Sigmoid colon (tissue), 7 donors: ENCODE measurements at regions of chr6 and their contacts with region 1.

Region 1: DNA sequence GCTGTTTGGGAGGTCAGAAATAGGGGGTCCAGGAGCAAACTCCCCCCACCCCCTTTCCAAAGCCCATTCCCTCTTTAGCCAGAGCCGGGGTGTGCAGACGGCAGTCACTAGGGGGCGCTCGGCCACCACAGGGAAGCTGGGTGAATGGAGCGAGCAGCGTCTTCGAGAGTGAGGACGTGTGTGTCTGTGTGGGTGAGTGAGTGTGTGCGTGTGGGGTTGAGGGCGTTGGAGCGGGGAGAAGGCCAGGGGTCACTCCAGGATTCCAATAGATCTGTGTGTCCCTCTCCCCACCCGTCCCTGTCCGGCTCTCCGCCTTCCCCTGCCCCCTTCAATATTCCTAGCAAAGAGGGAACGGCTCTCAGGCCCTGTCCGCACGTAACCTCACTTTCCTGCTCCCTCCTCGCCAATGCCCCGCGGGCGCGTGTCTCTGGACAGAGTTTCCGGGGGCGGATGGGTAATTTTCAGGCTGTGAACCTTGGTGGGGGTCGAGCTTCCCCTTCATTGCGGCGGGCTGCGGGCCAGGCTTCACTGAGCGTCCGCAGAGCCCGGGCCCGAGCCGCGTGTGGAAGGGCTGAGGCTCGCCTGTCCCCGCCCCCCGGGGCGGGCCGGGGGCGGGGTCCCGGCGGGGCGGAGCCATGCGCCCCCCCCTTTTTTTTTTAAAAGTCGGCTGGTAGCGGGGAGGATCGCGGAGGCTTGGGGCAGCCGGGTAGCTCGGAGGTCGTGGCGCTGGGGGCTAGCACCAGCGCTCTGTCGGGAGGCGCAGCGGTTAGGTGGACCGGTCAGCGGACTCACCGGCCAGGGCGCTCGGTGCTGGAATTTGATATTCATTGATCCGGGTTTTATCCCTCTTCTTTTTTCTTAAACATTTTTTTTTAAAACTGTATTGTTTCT is at the start of gene VEGFA:
- DNase-seq: peak; percentile 94
- H3K4me3 ChIP-seq: peak within 1 kb of the TSS; percentile 55 to 88 (median 66)
- H3K27ac ChIP-seq: peak within 1 kb of the TSS; percentile 95 to 99 (median 98)
- H3K4me1 ChIP-seq: peaks cover 0 to 42% (median 40%) of the 10 kb centered on the region in 4 donors
- H3K27me3 ChIP-seq: no peaks in the 10 kb centered on the region
- CTCF ChIP-seq: peak; percentile 97 to 100 (median 99)
- EP300 ChIP-seq: no peak
- POLR2A ChIP-seq: peak; percentile 58 to 72
- total RNA-seq, gene VEGFA: 20.9 to 60.9 (median 28.5) TPM

Region 2: GRCh38 chr6:43621429-43622180 is 148.2 kb before region 1 on chr6:
- intact Hi-C with region 1: no loop called
- DNase-seq: no peak
- H3K4me3 ChIP-seq: no peak overlapping the region
- H3K27ac ChIP-seq: no peak overlapping the region
- H3K4me1 ChIP-seq: peaks cover 0 to 4% (median under 1%) of the 10 kb centered on the region in 4 donors
- H3K27me3 ChIP-seq: no peaks in the 10 kb centered on the region
- CTCF ChIP-seq: no peak
- EP300 ChIP-seq: no peak
- POLR2A ChIP-seq: no peak

Region 3: DNA sequence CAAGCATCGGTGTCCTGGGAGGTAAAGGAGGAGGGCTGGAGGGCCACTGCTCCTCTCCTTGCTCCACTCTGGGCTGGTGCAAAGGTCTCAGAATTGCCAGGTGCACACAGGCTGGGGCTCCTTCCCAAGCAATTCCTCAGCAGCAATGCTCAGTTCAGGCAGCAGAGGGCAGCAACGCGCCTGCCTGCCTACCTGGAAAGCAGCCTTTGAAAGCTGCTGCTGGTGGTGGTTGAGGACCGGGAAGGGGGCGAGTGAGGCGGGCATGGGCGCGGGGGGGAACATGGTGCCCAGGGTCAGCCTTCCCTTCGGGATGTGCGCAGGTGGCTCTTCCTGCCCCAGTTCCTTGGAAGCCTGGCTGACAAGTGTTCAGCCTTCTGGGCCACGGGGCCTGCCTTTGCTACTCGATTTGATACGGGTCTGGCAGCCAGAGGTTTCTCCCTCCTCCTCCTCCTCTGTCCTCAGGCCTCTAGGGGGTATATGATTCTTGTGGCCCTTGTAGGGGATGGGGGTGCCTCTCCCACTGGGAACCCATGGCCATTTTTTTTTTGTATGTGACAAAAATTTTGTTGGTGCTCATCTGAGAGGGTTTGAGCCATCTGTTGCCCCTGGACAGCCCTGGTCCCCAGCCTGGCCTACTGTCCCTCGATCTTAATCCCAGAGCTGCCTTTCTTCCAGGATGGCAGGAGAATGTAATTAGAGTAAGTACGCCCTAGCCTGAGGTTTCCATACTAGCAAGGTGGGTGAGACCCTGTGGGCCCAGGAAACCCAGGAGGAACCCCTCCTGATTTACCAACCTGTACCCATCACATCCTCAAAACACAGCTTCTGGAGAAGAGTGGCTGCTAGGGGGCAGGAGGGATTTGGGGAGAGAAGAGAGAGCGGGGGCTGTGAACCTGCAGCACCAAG is 102.3 kb before region 1 on chr6:
- intact Hi-C with region 1: loop called (anchors 2 kb)
- DNase-seq: peak; percentile 88
- H3K4me3 ChIP-seq: peak overlapping the region in 2 of 4 donors; percentile 1 to 13
- H3K27ac ChIP-seq: no peak overlapping the region
- H3K4me1 ChIP-seq: peaks cover 0 to 37% (median 34%) of the 10 kb centered on the region in 4 donors
- H3K27me3 ChIP-seq: no peaks in the 10 kb centered on the region
- CTCF ChIP-seq: peak; percentile 86 to 97 (median 92)
- EP300 ChIP-seq: no peak
- POLR2A ChIP-seq: no peak

Region 4: GRCh38 chr6:43972913-43973300 is 203.1 kb after region 1 on chr6:
- intact Hi-C with region 1: loop called (anchors 1 kb)
- DNase-seq: peak; percentile 91
- H3K4me3 ChIP-seq: no peak overlapping the region
- H3K27ac ChIP-seq: peak overlapping the region; percentile 73 to 86 (median 78)
- H3K4me1 ChIP-seq: peaks cover 0 to 34% (median 31%) of the 10 kb centered on the region in 4 donors
- H3K27me3 ChIP-seq: no peaks in the 10 kb centered on the region
- CTCF ChIP-seq: no peak
- EP300 ChIP-seq: no peak
- POLR2A ChIP-seq: no peak

Region 5: GRCh38 chr6:44074439-44075136 is 304.8 kb after region 1 on chr6:
- intact Hi-C with region 1: loop called (anchors 1 kb)
- DNase-seq: peak; percentile 87
- H3K4me3 ChIP-seq: no peak overlapping the region
- H3K27ac ChIP-seq: peak overlapping the region; percentile 71 to 83 (median 81)
- H3K4me1 ChIP-seq: peaks cover 0 to 51% (median 35%) of the 10 kb centered on the region in 4 donors
- H3K27me3 ChIP-seq: peaks cover 0 to 7% (median 0%) of the 10 kb centered on the region in 3 donors
- CTCF ChIP-seq: peak; percentile 86 to 98 (median 92)
- EP300 ChIP-seq: no peak
- POLR2A ChIP-seq: no peak